ENCODE measurements at regions of chr1 and their contacts with region 1.

Region 1: DNA sequence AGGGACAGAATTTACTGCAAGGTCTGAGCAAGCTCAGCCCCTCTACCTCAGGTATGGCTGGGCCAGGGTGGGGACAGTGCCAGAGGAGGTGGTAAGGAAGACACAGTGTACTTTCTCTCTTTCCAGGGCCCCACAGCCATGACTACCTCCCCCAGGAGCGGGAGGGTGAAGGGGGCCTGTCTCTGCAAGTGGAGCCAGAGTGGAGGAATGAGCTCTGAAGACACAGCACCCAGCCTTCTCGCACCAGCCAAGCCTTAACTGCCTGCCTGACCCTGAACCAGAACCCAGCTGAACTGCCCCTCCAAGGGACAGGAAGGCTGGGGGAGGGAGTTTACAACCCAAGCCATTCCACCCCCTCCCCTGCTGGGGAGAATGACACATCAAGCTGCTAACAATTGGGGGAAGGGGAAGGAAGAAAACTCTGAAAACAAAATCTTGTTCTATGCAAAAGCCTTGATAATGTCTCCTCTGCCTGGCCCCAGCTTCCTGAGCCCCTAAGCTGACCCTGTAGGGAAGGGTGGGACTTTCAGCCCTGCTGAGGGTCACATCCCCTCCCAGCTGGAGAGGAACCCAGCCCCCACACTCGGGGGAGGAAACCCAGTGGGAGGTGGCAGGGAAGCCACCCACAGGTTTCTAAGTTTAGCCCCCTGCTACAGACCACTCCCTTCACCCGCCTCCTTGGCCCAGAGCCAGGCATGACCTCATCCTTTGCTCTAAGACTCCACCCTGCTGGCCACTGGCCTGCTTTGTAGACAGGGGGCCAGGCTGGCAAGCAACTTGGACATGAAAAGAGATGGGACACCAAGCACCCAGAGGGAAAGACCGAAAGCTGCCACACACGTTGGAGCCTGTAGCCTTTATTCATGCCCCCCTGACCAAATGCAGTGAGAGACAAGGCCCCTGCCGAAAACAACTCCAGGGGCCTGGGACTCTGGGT is 6.4 kb downstream of the RHOC start:
- DNase-seq: peak; percentile 98
- H3K4me3 ChIP-seq: no peak overlapping the region
- H3K27ac ChIP-seq: peak overlapping the region; percentile 88 to 99
- H3K4me1 ChIP-seq: peaks cover 16 to 67% (median 55%) of the 10 kb centered on the region in 4 donors
- H3K27me3 ChIP-seq: no peaks in the 10 kb centered on the region
- CTCF ChIP-seq: peak in 1 of 2 experiments; percentile 6

Region 2: DNA sequence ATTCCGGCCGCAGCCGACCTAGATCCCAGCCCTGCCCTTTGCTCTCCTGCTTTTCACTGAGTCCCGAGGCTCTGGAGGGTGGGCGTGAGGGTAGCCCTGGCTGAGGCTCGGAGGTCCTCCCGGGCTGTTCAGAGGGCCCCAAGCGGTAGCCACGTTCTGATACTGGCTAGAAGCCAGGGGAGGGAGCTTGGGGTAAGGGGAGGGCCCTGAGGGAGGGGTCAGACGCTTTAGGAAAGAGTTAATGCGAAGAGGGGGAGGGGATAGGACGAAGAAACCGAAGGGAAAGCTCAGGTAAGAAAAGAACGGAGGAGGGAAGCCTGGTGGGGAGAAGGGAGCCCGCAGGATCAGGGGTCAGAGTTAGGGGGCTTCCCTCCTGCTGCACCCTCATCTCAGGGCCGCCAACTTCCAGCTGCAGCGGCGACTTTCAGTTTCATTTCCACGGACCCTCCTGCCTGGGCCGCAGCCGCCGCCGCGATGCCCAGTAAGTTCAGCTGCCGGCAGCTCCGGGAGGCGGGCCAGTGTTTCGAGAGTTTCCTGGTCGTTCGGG is 26.0 kb before region 1 on chr1 and contains the start of gene MOV10:
- intact Hi-C with region 1: loop called (anchors 2 kb)
- DNase-seq: peak; percentile 70 to 81
- H3K4me3 ChIP-seq: peak within 1 kb of the TSS; percentile 65 to 78
- H3K27ac ChIP-seq: peak within 1 kb of the TSS; percentile 85 to 94
- H3K4me1 ChIP-seq: peaks cover 0 to 28% (median 15%) of the 10 kb centered on the region in 4 donors
- H3K27me3 ChIP-seq: no peaks in the 10 kb centered on the region
- CTCF ChIP-seq: no peak